ENCODE measurements at regions of chr2 and their contacts with region 1.

Region 1: DNA sequence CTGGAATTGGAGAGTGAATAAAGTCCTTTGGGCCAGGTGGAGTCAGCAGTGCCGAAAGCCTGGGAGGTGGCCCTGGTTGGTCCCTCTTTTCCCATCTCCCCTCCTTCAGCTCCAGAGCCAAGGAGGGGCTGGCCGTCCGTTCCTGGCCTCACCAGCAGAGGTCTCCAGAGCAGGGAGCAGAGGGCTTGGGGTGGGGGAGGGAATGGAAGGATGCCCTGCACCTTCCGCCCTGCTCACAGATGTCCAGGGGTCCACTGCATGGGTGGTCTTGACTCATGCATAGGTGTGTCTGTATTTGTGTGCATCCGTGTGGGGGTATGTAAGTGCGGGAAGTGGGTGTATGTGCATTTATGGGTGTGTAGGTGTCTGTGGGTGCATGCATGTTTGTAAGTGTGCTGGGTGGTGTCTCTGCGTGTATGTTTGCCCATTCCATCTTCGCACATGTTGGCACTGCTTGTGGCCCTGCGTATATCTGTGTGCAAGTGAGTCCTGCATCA is 201.8 kb downstream of the ZFP36L2 start:
- DNase-seq: peak; percentile 70 to 82 (median 80)
- H3K4me3 ChIP-seq: no peak overlapping the region
- H3K27ac ChIP-seq: peak overlapping the region; percentile 20 to 34
- H3K4me1 ChIP-seq: peaks cover 7% of the 10 kb centered on the region
- H3K27me3 ChIP-seq: no peaks in the 10 kb centered on the region
- CTCF ChIP-seq: peak; percentile 63 to 85 (median 78)
- EP300 ChIP-seq: no peak
- POLR2A ChIP-seq: no peak

Region 2: GRCh38 chr2:42464631-42465030 is 559.9 kb before region 1 on chr2:
- intact Hi-C with region 1: no loop called
- DNase-seq: no peak
- H3K4me3 ChIP-seq: no peak overlapping the region
- H3K27ac ChIP-seq: no peak overlapping the region
- H3K4me1 ChIP-seq: no peaks in the 10 kb centered on the region
- H3K27me3 ChIP-seq: no peaks in the 10 kb centered on the region
- CTCF ChIP-seq: no peak
- EP300 ChIP-seq: no peak
- POLR2A ChIP-seq: no peak

Region 3: DNA sequence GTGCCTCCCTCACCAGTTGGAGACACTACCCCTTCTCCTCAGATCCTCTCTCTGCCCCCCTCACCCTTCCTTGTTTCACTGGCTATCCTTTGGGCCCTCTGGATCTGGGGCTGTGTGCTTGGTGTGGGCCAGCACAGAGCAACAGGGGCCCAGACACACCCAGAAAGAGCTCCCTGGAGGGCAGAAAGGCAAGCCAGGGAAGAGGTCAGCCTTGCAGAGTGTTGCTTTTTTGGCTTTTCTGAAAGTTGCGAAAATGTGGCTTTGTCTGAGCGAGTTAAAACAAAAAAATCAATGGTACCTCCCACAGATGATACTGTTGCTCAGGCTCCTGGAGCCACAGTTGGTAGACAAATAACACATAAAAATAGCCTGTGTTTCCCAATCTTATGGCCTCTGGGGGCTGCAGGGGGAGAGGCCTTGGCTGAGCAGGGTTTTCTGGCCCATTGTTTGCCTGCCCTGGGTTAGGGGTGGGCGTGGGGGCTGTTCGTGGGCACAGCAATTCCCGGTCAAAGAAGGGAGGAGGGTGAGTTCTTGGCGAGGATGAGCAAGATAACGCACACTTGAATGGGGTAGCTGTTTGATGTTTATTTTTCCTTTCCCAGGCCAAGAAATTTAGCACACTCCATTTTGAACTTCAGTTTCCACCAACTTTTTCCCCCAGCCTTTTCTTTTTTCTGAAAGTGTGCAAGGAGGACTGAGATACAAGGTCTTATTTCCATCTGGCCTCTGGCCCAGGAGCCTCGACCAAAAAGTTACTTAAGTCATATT is 65.1 kb before region 1 on chr2:
- intact Hi-C with region 1: loop called in 1 of 4 experiments (anchors 5 kb)
- DNase-seq: peak; percentile 88 to 92 (median 91)
- H3K4me3 ChIP-seq: no peak overlapping the region
- H3K27ac ChIP-seq: peak overlapping the region in 1 of 2 donors; percentile 94
- H3K4me1 ChIP-seq: peaks cover 58% of the 10 kb centered on the region
- H3K27me3 ChIP-seq: no peaks in the 10 kb centered on the region
- CTCF ChIP-seq: no peak
- EP300 ChIP-seq: peak; percentile 24
- POLR2A ChIP-seq: no peak

Region 4: DNA sequence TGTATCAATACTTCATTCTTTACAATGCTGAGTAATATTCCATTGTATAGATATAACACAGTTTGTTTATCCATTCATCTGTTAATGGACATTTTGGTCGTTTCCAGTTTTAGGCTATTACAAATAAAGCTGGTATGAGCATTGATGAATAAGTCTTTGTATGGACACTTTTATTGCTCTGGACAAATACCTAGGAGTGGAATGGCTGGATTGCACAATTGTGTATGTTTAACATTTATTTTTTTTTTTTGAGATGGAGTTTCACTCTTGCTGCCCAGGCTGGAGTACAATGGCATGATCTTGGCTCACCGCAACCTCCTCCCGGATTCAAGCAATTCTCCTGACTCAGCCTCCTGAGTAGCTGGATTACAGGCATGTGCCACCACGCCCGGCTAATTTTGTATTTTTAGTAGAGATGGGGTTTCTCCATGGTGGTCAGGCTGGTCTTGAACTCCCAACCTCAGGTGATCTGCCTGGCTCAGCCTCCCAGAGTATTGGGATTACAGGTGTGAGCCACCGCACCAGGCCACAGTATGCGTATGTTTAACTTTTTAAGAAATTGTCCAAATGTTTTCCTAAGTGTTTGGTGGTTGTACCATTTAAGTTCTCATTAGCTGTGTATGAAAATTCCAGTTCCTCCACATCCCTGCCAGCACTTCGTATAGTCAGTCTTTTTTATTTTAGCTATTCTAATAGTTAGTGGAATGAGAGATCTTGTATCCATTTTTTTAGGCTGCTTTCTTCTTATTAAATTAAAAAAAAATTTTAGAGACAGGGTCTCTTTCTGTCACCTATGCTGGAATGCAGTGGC is 37.2 kb before region 1 on chr2:
- intact Hi-C with region 1: no loop called
- DNase-seq: peak in 1 of 5 donors; percentile 6
- H3K4me3 ChIP-seq: no peak overlapping the region
- H3K27ac ChIP-seq: no peak overlapping the region
- H3K4me1 ChIP-seq: no peaks in the 10 kb centered on the region
- H3K27me3 ChIP-seq: no peaks in the 10 kb centered on the region
- CTCF ChIP-seq: no peak
- EP300 ChIP-seq: no peak
- POLR2A ChIP-seq: no peak

Region 5: DNA sequence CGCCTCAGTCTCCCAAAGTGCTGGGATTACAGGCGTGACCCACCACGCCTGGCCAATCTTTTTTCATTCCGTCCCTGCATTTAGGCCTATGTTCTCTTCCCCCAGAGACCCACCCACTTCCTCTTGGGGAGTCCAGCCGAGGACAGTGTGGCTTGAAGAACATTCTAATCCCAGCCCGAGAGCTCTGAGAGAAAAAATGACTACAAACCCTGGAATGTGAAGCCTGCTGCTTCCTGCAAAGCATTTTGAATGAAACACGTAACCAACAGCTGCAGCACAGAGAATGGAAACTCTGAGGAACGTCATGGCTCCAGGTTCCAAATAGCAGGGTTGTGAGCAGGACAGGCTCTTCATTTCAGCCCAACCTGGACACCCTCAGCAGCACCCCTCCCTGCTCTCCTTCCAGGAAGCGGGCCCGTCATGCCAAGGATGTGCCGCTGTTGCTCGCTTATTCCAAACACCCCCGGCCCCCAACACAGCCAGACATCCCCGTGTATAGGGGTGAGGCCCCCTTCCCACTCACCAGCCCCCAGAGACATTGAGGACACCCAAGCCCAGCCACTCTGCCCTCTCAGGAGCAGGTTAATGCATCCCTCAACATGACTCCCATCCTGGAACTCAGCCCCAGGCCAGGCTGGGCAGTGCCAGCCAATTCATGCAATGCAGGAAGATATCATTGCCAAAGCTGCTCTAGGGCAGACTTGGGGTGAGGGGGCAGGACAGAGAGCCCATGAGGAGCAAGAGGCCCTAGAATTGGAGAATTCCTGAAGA is 62.1 kb after region 1 on chr2:
- intact Hi-C with region 1: loop called in 1 of 4 experiments (anchors 10 kb)
- DNase-seq: peak; percentile 61 to 84 (median 74)
- H3K4me3 ChIP-seq: no peak overlapping the region
- H3K27ac ChIP-seq: peak overlapping the region; percentile 61 to 76
- H3K4me1 ChIP-seq: peaks cover 31% of the 10 kb centered on the region
- H3K27me3 ChIP-seq: no peaks in the 10 kb centered on the region
- CTCF ChIP-seq: no peak
- EP300 ChIP-seq: peak; percentile 77
- POLR2A ChIP-seq: peak; percentile 21

Region 6: DNA sequence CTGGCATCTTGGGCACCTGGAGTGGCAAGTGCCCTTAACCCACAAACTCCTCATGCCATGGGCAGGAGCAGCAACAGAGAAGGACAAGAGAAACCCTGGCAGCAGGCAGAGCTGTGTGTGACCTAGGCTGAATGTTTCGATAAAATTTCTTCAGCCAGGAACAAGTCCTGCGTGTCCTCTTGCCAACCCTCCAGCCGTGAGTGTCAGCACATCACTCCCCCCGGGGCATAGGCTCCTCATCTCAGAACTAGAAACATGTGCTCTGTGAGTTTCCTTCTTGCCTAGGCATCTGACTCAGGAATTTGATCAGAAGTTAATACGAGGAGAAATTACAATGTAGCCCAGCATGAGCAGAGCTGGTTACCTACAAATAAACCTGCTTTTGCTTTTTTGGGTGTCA is 816.4 kb after region 1 on chr2:
- intact Hi-C with region 1: no loop called
- DNase-seq: no peak
- H3K4me3 ChIP-seq: no peak overlapping the region
- H3K27ac ChIP-seq: no peak overlapping the region
- H3K4me1 ChIP-seq: no peaks in the 10 kb centered on the region
- H3K27me3 ChIP-seq: no peaks in the 10 kb centered on the region
- CTCF ChIP-seq: no peak
- EP300 ChIP-seq: no peak
- POLR2A ChIP-seq: no peak

Measured in ovary (tissue), 10 donors.